MCF 10A (cell line): ENCODE measurements at regions of chr6 and their contacts with region 1.

Region 1: GRCh38 chr6:53544470-53545308 is at the start of gene GCLC:
- DNase-seq: peak; percentile 96
- H3K4me3 Mint-ChIP-seq: peak within 1 kb of the TSS; percentile 93
- H3K27ac Mint-ChIP-seq: peak within 1 kb of the TSS; percentile 66
- H3K4me1 Mint-ChIP-seq: peaks cover 43% of the 10 kb centered on the region
- H3K27me3 Mint-ChIP-seq: no peaks in the 10 kb centered on the region
- CTCF ChIP-seq: peak; percentile 77
- total RNA-seq, gene GCLC: 74.8 and 108 TPM in 2 replicates

Region 2: GRCh38 chr6:53439556-53439955 is 105.1 kb before region 1 on chr6:
- CTCF ChIA-PET with region 1: no interaction called
- POLR2A ChIA-PET with region 1: no interaction called
- intact Hi-C with region 1: no loop called
- DNase-seq: no peak
- H3K4me3 Mint-ChIP-seq: no peak overlapping the region
- H3K27ac Mint-ChIP-seq: no peak overlapping the region
- H3K4me1 Mint-ChIP-seq: peaks cover 22% of the 10 kb centered on the region
- H3K27me3 Mint-ChIP-seq: no peaks in the 10 kb centered on the region
- CTCF ChIP-seq: no peak

Region 3: DNA sequence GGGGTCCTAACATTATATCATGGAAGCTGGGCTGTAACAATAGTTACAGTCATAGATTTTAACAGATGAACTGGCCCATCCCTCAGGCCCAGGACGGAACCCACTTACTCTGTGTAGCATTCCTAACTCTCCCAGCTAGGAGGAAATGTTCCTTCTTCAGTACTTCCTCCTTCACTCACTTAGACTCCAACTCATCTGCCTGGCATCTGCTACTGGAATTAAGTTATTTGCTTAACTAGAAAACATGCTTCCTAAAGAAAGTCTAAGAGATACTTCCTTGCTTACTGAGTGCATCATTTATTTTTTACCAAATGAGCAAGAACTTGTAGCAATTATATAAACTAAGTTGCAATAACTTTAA is 20.3 kb before region 1 on chr6:
- CTCF ChIA-PET with region 1: interaction called, 3 read pairs
- POLR2A ChIA-PET with region 1: interaction called, 17 read pairs
- intact Hi-C with region 1: no loop called
- DNase-seq: no peak
- H3K4me3 Mint-ChIP-seq: no peak overlapping the region
- H3K27ac Mint-ChIP-seq: peak overlapping the region; percentile 75
- H3K4me1 Mint-ChIP-seq: peaks cover 34% of the 10 kb centered on the region
- H3K27me3 Mint-ChIP-seq: no peaks in the 10 kb centered on the region
- CTCF ChIP-seq: no peak

Region 4: DNA sequence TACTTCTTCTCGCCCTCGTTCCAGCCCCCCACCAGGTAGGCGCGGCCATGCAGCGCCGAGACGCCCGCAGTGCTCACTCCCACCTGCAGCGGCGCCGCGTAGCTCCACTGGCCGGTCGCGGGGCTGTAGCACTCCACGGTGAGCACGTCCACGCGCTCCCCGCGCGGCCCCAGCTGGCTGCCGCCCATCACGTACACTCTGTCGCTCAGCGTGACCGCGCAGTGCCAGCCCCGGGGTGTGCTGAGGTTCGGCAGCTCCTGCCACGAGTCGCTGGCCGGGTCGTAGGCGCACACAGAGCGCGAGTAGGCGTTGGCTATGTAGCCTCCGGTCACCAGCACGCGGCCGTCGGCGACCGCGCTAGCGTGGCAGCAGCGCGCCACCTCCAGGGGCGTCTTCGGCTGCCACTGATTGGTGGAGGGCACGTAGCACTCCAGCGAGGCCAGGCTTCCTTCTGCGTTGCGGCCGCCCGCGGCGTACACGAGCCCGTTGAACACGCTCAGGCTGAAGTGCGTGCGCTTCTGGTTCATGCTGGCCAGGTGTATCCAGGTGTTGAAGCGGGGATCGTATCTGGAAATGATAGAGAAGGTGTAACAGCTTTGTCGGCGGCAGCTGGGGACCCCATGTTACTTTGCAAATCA is 107.2 kb after region 1 on chr6:
- CTCF ChIA-PET with region 1: interaction called, 28 read pairs
- POLR2A ChIA-PET with region 1: interaction called, 66 read pairs
- intact Hi-C with region 1: loop called (anchors 1 kb)
- DNase-seq: peak; percentile 86
- H3K4me3 Mint-ChIP-seq: peak overlapping the region; percentile 94
- H3K27ac Mint-ChIP-seq: peak overlapping the region; percentile 84
- H3K4me1 Mint-ChIP-seq: peaks cover 34% of the 10 kb centered on the region
- H3K27me3 Mint-ChIP-seq: no peaks in the 10 kb centered on the region
- CTCF ChIP-seq: peak; percentile 23